ENCODE measurements at regions of chr9 and their contacts with region 1.

Region 1: DNA sequence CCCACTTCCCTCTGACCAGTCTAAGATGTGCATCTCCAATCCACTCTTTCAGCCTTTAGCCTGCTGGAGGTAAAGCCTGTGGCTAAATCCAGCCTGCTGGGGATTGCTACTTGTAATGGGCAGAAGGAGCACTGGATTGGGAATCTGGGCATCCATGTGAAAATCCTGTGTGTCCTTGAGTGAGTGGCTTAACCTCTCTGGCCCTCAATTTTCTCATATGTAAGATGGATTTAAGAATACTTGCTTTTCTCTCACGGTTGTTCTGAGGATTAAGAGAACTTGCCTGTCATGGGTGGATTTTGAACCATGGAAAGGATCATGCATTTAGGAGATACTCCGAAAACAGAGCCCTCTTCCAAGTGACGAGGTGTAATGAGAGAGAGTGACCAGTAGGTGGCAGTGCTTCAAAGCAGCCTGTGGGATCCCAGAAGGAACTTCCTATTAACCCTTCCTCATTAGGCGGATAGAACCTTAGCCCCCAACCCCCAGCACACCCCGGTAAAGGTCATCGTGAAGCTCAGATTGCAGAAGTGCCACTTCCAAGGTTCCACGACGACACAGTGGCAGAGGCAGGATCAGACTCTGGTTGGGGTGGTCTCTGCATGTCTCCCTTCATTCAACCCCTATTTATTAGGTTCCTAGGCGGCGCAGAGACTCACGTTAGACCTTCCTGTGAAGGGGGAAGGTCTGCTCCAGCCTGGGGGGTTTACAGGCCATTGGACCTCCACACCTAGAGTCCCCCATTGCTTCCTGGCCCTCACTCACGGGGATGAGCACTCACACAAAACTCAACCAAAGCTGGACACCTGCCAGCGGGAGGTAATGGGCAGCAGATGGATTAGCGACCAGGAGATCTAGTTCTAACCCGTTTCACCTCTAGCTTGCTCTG is 68.7 kb upstream of the ZNF618 start:
- DNase-seq: peak; percentile 73
- H3K4me3 ChIP-seq: peak overlapping the region in 1 of 3 experiments; percentile 25
- H3K27ac ChIP-seq: no peak overlapping the region
- H3K4me1 ChIP-seq: no peaks in the 10 kb centered on the region
- H3K27me3 ChIP-seq: no peaks in the 10 kb centered on the region
- CTCF ChIP-seq: peak; percentile 84 to 87
- POLR2A ChIP-seq: no peak

Region 2: GRCh38 chr9:113675475-113675941 is 131.9 kb before region 1 on chr9:
- CTCF ChIA-PET with region 1: no interaction called
- POLR2A ChIA-PET with region 1: no interaction called
- dilution Hi-C with region 1: no loop called
- intact Hi-C with region 1: no loop called
- DNase-seq: peak; percentile 99
- H3K4me3 ChIP-seq: no peak overlapping the region
- H3K27ac ChIP-seq: peak overlapping the region; percentile 83
- H3K4me1 ChIP-seq: peaks cover 30% of the 10 kb centered on the region
- H3K27me3 ChIP-seq: no peaks in the 10 kb centered on the region
- CTCF ChIP-seq: no peak
- POLR2A ChIP-seq: peak; percentile 64

Region 3: GRCh38 chr9:113886466-113886865 is 79.0 kb after region 1 on chr9:
- CTCF ChIA-PET with region 1: no interaction called
- POLR2A ChIA-PET with region 1: no interaction called
- dilution Hi-C with region 1: no loop called
- intact Hi-C with region 1: no loop called
- DNase-seq: peak; percentile 11
- H3K4me3 ChIP-seq: no peak overlapping the region
- H3K27ac ChIP-seq: peak overlapping the region; percentile 35
- H3K4me1 ChIP-seq: peaks cover 22% of the 10 kb centered on the region
- H3K27me3 ChIP-seq: no peaks in the 10 kb centered on the region
- CTCF ChIP-seq: no peak
- POLR2A ChIP-seq: no peak

Region 4: DNA sequence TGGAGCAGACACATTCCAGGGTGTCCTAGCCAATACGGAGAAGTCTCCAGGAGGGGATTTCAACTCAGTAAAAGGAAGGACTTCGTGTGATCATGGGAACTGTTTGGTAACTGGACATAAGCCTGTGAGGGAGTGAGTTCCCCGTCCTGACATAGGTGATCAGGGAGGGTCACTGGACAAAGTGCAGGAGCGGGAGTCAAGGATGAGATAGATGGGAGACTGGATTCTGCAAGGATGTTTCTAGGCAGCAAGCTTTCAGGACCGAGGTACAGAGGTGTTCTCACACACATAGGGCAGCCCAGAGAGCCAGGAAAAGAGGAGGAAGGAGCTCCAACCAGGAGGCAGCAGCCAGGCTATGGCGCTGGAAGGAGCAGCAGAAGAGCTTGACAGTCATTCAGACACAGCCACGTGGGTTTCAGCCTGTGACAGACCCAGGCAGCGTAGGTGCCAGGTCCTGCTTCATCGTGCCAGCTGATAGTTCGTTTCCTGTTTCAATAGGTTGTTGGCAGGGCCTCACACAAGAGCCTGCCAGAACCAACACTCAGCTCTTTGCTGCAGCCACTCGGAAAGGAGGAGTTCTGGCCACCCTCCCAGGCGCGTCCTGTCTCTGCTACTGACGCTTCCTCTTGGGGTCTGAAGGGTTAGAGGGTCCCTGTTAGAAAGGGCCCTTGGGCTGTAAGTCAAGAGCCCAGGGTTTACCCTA is 186.6 kb after region 1 on chr9:
- CTCF ChIA-PET with region 1: interaction called, 5 read pairs
- POLR2A ChIA-PET with region 1: no interaction called
- dilution Hi-C with region 1: no loop called
- intact Hi-C with region 1: loop called (anchors 1 kb)
- DNase-seq: peak; percentile 95
- H3K4me3 ChIP-seq: no peak overlapping the region
- H3K27ac ChIP-seq: peak overlapping the region; percentile 40
- H3K4me1 ChIP-seq: peaks cover 42% of the 10 kb centered on the region
- H3K27me3 ChIP-seq: no peaks in the 10 kb centered on the region
- CTCF ChIP-seq: no peak
- POLR2A ChIP-seq: no peak

Region 5: GRCh38 chr9:114033397-114034103 is 226.1 kb after region 1 on chr9:
- CTCF ChIA-PET with region 1: no interaction called
- POLR2A ChIA-PET with region 1: no interaction called
- dilution Hi-C with region 1: no loop called
- intact Hi-C with region 1: loop called (anchors 1 kb)
- DNase-seq: peak; percentile 19
- H3K4me3 ChIP-seq: no peak overlapping the region
- H3K27ac ChIP-seq: no peak overlapping the region
- H3K4me1 ChIP-seq: peaks cover 6% of the 10 kb centered on the region
- H3K27me3 ChIP-seq: no peaks in the 10 kb centered on the region
- CTCF ChIP-seq: peak; percentile 26 to 68
- POLR2A ChIP-seq: no peak

Region 6: DNA sequence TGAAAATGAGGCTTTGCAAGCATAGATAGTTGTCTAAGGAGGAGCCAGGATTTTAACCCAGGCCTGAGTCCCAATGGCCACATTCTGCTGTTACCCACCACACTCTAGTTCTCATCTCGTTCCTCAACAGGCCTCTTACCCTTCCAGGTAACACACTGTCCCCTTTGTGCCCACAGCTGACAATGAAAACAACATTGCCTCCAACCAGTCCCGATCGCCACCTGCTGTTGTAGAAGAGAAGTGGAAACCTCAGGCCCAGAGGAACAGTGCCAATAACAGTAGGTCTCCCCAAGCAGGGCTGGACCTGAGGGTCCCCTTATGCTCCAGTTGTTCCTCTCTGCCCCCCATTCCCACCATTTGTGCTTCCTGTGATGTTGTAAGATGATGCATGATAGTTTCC is 240.3 kb after region 1 on chr9:
- CTCF ChIA-PET with region 1: interaction called, 8 read pairs
- POLR2A ChIA-PET with region 1: no interaction called
- dilution Hi-C with region 1: no loop called
- intact Hi-C with region 1: loop called (anchors 2 kb)
- DNase-seq: peak; percentile 19
- H3K4me3 ChIP-seq: no peak overlapping the region
- H3K27ac ChIP-seq: no peak overlapping the region
- H3K4me1 ChIP-seq: peaks cover 4% of the 10 kb centered on the region
- H3K27me3 ChIP-seq: no peaks in the 10 kb centered on the region
- CTCF ChIP-seq: peak in 1 of 2 donors; percentile 29
- POLR2A ChIP-seq: no peak